ENCODE measurements at regions of chr1 and their contacts with region 1.

Region 1: DNA sequence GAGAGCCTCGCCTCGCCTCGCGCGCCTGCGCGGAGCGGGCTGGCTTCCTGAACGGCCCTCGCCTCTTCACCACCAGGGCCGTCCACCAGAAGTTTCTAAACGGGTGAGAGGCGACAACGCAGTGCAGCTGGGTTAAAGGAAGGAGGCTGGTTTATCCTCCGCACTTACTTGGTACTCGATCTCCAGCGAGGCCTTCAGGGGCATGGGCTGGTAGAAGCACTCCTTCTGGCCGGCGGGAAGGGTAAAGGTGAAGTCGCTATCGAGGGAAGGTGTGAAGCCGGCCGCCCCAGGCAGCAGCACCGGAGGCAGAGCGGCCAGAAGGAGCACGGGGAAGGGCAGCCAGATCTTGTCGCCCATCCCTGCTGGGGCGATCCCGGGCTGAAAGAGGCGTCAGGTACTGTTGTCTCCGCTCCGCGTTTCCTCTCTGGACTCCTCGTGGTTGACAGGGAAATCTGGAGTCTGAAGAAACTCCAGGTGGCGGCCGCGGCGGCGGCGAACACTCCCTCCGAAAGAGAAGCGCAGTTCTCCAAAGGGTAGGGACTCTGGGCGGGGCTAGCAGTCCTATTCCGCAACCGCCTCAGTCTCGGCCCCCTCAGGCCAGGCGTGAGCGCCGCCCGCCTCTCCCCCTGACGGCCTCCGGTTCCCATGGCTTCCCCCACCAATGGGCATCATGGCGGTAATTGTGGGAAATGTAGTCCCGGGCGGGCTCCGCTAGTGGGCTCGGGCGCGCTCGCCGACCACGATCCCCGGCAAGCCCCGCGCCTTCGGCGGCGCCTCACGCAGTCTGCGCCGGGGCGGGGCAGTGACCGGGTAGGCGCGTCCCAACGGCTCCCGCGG is at the start of gene TMED5:
- DNase-seq: peak; percentile 97 to 98
- ATAC-seq: peak; percentile 98 to 99 (median 99)
- H3K4me3 ChIP-seq: peak within 1 kb of the TSS; percentile 63 to 91 (median 81)
- H3K27ac ChIP-seq: peak within 1 kb of the TSS; percentile 93 to 99 (median 98)
- H3K4me1 ChIP-seq: peaks cover 0 to 44% (median 25%) of the 10 kb centered on the region in 9 donors
- H3K27me3 ChIP-seq: no peaks in the 10 kb centered on the region
- CTCF ChIP-seq: peak in 5 of 9 donors; percentile 22 to 29 (median 23)
- total RNA-seq, gene TMED5: 36.7 to 82.4 (median 39.2) TPM

Region 2: DNA sequence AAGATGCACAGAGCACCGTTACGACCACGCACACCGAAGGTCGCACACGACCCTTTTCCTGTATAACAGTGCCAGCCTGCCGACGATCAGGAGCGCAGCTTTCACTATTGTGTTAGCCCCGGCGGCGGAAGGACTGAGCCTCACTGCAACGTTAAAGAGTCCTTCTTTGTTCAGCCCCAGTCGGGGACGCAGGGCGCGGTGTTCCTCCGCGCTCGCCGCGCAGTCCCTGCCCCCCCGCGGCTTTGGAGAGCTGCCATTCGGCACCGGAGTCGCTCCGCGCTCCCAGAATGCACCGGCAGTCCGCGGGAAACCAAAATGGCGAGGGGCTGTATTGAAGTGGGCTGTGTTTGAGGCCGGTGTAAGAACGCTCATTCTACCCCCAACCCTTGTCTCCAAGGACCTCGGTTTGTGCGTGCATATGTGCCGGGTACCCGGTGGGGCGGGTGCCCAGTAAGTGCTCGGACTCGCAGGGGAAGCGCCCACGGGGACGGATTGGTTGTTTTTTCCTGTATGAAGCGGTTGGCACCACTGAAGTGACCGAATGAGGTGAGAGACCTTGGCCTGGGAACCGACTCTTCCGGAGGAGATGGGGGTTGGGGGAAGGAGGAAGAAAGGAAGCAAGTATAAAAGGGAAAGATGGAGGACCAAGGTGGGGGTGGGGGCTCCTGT is 101.0 kb before region 1 on chr1 and contains the start of gene MTF2:
- intact Hi-C with region 1: loop called in 4 of 10 experiments (anchors 1 to 5 kb)
- DNase-seq: peak; percentile 96 to 97
- ATAC-seq: peak; percentile 97 to 99 (median 98)
- H3K4me3 ChIP-seq: peak within 1 kb of the TSS; percentile 67 to 92 (median 81)
- H3K27ac ChIP-seq: peak within 1 kb of the TSS; percentile 50 to 92 (median 85)
- H3K4me1 ChIP-seq: peaks cover 0 to 44% (median 21%) of the 10 kb centered on the region in 9 donors
- H3K27me3 ChIP-seq: no peaks in the 10 kb centered on the region
- CTCF ChIP-seq: peak in 1 of 9 donors; percentile 5
- total RNA-seq, gene MTF2: 7.6 to 10.0 (median 8.3) TPM

Region 3: DNA sequence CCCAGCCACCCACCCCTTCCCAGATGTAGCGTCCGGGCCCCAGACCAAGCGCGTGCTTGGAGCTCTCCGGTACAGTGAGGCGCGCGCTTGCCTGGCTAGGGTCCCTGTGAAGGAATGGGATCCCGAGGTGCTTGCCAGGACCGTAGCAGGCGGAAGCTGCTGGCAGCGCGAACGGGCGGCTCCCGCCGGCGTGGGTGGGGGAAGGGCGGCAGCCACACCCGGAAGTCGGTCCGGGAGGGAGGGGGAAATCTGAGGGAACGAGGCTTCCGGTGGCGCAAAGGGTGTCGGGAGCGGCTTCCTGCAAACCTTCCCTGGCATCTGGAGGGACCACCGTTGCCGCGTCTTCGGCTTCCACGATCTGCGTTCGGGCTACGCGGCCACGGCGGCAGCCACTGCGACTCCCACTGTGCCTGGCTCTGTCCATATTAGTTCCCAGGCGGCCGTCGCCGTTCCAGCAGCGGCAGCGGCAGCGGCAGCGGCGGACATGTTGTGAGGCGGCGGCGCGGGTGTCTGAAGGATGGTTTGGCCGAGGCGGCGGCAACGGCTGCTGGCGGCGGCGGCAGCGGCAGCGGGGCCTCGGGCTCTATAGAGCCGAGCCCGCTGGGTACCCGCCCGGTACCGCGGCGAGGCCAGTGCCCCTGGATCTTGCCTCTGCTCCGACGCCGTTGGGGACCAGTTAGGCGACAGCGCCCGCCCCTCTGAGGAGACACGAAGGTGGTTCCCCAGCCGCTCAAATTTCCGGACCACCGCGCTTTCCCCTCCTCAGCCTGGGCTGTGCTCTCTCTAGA is 165.7 kb after region 1 on chr1 and contains the start of gene DR1:
- intact Hi-C with region 1: loop called in 1 of 10 experiments (anchors 5 kb)
- DNase-seq: peak; percentile 94 to 95
- ATAC-seq: peak; percentile 97 to 99 (median 98)
- H3K4me3 ChIP-seq: peak within 1 kb of the TSS; percentile 80 to 96 (median 92)
- H3K27ac ChIP-seq: peak within 1 kb of the TSS; percentile 89 to 98 (median 94)
- H3K4me1 ChIP-seq: peaks cover 0 to 54% (median 38%) of the 10 kb centered on the region in 9 donors
- H3K27me3 ChIP-seq: no peaks in the 10 kb centered on the region
- CTCF ChIP-seq: no peak
- total RNA-seq, gene DR1: 33.0 to 40.8 (median 37.5) TPM